Activated CD4-positive, alpha-beta T cell treated with anti-CD3 and anti-CD28 coated beads for 36 hours (primary cell): ENCODE measurements at regions of chr19 and their contacts with region 1.

Region 1: DNA sequence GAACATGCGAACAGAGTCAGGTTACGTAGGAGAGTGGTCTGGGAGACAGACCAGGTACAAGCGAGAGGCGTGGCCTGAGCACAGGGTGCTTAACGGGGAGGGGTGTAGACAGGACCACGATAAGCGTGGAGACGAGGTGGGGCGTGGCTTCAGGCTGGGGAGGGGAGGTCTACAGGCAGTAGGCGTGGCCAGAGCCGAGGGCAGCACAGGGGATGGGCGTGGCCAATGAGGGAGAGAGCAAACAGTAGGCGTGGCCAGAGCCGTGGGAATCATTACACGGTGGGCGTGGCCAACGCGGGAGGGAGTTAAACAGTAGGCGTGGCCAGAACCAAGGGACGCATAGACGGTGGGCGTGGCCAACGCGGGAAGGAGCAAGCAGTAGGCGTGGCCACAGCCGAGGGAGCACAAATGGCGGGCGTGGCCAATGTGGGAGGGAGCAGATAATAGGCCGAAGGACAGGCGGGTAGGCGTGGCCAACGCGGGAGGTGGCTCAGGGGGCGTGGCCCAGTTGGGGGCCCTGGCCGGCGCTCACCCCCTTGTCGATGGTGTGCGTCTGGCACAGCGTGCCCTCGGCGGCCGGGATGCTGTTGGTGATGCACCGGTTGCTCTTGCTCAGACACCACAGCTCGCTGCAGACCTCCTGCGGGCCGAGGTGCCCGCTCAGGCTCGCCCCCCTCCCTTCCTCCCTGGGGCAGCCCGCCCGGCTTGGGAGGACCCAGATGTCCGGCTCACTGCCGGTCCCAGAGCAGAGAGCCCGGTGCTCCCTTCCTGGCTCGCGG is 15.2 kb upstream of the MYO1F start:
- DNase-seq: peak; percentile 99
- ATAC-seq: peak; percentile 94
- H3K4me3 Mint-ChIP-seq: peak overlapping the region; percentile 70
- H3K27ac Mint-ChIP-seq: no peak overlapping the region
- H3K4me1 Mint-ChIP-seq: peaks cover 15% of the 10 kb centered on the region
- H3K27me3 Mint-ChIP-seq: no peaks in the 10 kb centered on the region

Region 2: GRCh38 chr19:7997809-7998480 is 594.5 kb before region 1 on chr19:
- CTCF ChIA-PET with region 1: no interaction called
- POLR2A ChIA-PET with region 1: no interaction called
- intact Hi-C with region 1: no loop called
- DNase-seq: no peak
- ATAC-seq: no peak
- H3K4me3 Mint-ChIP-seq: no peak overlapping the region
- H3K27ac Mint-ChIP-seq: no peak overlapping the region
- H3K4me1 Mint-ChIP-seq: peaks cover 64% of the 10 kb centered on the region
- H3K27me3 Mint-ChIP-seq: no peaks in the 10 kb centered on the region

Region 3: GRCh38 chr19:8609279-8610040 is 17.0 kb after region 1 on chr19:
- CTCF ChIA-PET with region 1: interaction called, 4 read pairs
- POLR2A ChIA-PET with region 1: no interaction called
- intact Hi-C with region 1: loop called in 1 of 2 experiments (anchors 1 kb)
- DNase-seq: peak; percentile 48
- ATAC-seq: peak; percentile 37
- H3K4me3 Mint-ChIP-seq: peak overlapping the region; percentile 83
- H3K27ac Mint-ChIP-seq: peak overlapping the region; percentile 79
- H3K4me1 Mint-ChIP-seq: peaks cover 20% of the 10 kb centered on the region
- H3K27me3 Mint-ChIP-seq: peaks cover 6% of the 10 kb centered on the region